ENCODE measurements at regions of chr10 and their contacts with region 1.

Region 1: GRCh38 chr10:13299437-13300287 is at the start of gene PHYH:
- DNase-seq: peak; percentile 96
- total RNA-seq, gene PHYH: 26.7 to 35.1 TPM

Region 2: DNA sequence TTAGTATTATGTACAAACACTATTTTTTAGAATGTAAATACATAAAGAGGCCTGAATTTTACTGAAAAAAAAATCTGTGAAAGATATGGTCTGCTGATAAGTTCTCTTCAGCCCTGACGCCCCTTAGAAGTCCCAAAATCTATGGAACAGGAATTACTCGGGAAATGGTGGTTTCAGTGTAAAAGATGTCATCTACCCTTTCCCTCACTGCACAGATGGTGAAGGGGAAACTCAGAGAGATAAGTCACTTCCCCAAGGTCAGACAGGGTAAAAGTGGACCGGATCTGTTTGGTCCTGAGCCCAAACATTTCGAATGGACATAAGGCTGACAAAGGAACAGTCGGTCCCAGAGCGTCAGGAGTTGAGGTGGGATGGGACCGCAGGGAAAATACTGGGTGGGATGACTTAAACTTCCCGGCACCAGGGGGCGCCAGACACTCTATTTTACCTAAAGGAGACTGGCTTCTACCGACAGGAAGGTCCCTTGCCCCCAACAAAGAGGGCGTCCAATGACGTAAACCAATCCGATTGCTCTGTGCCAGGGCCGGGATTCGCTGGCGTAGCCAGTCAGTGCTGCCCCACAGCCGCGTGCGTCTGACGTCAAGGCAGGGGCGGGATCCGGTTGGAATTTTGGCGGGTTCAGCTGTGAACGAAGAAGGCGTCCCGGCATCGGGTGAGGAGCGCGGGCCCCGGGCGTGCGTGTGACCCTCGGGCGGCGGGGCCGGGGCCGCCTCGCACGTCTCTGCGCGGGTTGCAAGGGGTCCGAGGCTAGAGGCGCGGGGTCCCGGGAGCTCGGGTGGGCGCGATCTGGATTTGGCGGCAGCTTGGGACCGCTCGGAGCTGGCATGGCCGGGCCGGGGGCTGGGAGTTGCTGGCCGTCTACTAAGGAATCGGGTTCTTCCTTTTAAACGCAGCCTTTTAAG is 138.5 kb before region 1 on chr10 and contains the start of gene MCM10:
- intact Hi-C with region 1: loop called in 1 of 2 experiments (anchors 2 kb)
- DNase-seq: peak; percentile 99
- total RNA-seq, gene MCM10: 0.23 to 0.76 TPM

Region 3: DNA sequence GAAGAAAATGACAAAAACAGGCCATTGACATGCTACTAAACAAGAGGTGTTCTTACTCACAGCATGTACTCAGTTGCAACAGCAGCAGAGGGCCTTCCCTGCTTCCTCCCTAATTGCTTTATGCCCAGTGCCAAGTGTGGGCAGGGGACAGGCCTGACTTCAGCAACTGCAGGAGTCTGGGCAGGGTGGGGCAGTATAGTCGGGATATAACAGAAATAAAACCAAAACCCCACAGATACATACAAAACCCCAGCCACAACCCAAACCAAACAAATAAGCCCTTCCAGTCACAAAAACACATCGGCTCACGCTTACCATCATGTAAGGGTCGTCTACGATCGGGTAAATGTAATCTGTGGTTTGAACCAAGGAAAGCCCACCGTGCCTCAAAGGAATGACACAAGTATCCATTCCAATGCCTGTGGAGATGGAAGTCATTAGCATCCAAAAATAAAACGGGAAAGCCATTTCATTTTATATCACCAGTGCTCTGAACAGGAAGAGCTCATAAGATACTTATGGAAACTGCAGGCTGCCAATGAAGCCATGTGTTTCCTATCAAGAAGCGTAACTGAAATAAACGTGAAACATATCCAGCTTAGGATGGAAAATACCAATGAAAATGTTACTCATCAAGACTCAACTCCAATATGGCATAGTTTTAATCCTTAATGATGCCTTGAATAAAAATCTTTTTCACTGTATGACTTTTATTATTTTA is 38.9 kb after region 1 on chr10:
- intact Hi-C with region 1: no loop called
- DNase-seq: peak; percentile 23